MCF 10A (cell line): ENCODE measurements at regions of chr22 and their contacts with region 1.

Region 1: GRCh38 chr22:37686002-37686982 is at the start of gene NOL12:
- DNase-seq: peak; percentile 90
- H3K4me3 Mint-ChIP-seq: peak within 1 kb of the TSS; percentile 96
- H3K27ac Mint-ChIP-seq: peak within 1 kb of the TSS; percentile 96
- H3K4me1 Mint-ChIP-seq: peaks cover 30% of the 10 kb centered on the region
- H3K27me3 Mint-ChIP-seq: no peaks in the 10 kb centered on the region
- CTCF ChIP-seq: no peak
- total RNA-seq, gene NOL12: 47.1 and 50.8 TPM in 2 replicates

Region 2: DNA sequence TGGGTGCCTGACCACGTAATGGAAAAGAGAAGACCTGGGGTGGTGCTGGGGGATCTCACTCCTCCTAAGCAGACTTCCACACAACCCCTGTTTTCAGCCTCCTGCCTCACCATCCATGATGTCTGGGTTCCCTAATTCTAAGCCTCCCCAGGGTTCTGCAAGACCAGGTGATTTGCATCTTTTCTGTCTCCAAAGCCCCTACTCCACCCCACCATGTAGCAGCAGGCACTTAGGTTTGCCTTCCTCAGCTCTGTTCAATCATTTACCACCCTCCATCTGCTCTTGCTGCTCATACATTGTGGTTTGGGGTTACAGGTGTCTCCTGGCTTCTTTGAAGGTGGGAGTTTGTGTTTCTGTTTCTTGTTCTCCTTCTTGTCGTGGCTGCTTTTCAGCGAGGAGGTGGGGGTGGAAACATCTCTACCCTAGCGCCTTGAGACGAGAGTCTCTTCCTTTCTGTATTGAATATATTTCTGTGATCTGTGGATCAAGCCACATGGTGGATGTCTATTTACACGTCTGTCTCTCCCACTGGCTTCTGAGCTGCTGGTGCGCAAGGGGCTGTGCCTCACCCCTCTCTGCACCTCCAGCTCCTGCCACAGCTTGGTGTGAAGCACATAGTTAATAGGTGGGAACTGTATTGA is 467.4 kb before region 1 on chr22:
- CTCF ChIA-PET with region 1: no interaction called
- POLR2A ChIA-PET with region 1: no interaction called
- intact Hi-C with region 1: no loop called
- DNase-seq: no peak
- H3K4me3 Mint-ChIP-seq: no peak overlapping the region
- H3K27ac Mint-ChIP-seq: no peak overlapping the region
- H3K4me1 Mint-ChIP-seq: no peaks in the 10 kb centered on the region
- H3K27me3 Mint-ChIP-seq: peaks cover 36% of the 10 kb centered on the region
- CTCF ChIP-seq: no peak

Region 3: GRCh38 chr22:37746366-37747079 is 60.2 kb after region 1 on chr22:
- CTCF ChIA-PET with region 1: interaction called, 3 read pairs
- POLR2A ChIA-PET with region 1: interaction called, 27 read pairs
- intact Hi-C with region 1: no loop called
- DNase-seq: no peak
- H3K4me3 Mint-ChIP-seq: peak overlapping the region; percentile 77
- H3K27ac Mint-ChIP-seq: peak overlapping the region; percentile 67
- H3K4me1 Mint-ChIP-seq: peaks cover 57% of the 10 kb centered on the region
- H3K27me3 Mint-ChIP-seq: no peaks in the 10 kb centered on the region
- CTCF ChIP-seq: no peak